ENCODE measurements at regions of chr9 and their contacts with region 1.

Region 1: DNA sequence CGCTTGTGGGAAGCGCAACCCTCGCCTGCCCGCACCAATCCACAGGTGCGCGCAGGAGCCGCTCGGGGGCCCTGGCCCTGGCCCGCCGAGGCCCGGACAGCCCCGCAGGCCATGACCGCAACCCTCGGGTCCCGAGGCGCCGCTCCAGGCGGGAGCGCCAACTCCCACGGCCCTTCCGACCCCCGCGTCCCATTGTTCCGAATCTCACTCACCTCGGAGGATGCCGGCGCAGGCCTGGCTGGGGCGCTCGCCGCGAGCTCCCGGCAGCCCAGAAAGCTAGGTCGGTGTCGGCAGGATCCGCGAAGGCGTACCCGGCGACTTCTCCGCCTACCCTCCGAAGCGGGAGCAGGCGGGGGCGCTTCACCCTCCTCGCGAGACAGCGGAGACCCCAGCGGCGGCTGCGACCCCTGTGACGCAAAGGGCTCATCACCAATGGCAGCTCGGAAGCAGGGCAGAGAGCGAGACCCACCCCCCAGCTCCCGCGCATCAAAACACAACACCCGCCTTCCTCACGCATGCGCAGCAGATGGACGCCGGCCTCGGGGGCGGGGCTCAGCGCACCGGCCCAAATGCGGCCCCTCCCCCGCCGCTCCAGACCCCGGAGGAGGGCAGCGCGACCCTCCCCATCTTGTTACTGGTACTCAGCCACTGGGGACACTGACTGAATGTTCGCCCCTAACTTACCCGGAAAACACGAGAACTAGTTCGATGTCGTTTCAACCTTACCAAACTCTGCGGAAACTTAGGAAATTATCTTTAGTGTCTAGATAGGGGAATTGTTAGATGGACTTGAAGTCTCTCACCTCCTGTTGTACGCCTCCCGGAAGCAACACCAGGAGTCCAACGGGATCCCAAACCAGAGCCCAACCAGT is 1.3 kb upstream of the SMIM27 start:
- DNase-seq: peak; percentile 93 to 97 (median 95)
- ATAC-seq: peak; percentile 80 to 89 (median 88)
- H3K4me3 ChIP-seq: peak overlapping the region; percentile 54 to 87 (median 76)
- H3K27ac ChIP-seq: peak overlapping the region; percentile 64 to 99 (median 96)
- H3K4me1 ChIP-seq: peaks cover 0 to 39% (median 18%) of the 10 kb centered on the region in 12 donors
- H3K27me3 ChIP-seq: no peaks in the 10 kb centered on the region
- CTCF ChIP-seq: peak in 2 of 12 donors; percentile 13 to 40
- POLR2A ChIP-seq: peak in 1 of 2 donors; percentile 40

Region 2: DNA sequence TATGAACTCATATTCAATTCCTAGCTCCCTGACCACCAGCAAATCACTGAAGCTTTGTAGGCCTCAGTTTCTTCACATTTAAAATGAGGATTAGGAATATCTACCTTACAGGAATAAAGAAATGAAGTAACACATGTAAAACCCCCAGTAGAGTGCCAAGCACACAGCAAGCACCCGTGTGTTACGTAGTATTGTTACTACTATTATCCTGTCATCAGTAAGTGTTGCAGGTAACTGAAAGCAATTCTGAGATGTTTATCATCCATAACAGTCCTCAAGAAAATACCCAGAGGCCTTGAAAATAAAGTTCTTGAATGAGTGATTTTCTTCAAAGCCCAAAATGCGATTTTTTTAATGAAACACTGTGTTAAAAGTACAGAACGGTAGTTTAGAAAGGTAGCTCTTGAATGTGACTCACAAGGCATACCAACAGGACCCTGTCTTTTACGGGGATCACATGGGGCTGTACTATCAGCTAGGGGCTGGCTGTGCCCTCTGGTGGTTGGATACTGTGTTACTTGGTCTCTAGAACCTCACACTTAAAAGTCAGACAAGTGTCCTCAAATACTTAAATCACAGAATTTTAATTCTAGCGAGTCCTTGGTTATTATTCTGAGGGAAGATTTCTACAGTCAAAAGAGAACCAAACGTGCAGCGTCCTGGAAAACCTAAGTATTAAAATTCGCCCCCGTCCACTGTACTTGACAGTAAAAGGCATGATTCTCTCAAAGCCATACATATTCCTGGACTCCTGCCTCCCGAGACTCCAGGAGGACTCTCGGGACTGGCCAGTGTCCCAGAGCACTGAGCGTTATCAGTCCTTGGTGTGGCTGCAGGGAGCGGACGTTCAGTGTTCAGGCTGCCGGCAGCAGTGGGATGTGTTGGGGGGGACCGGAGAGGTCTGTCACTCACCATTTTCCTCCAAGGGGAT is 21.4 kb after region 1 on chr9:
- intact Hi-C with region 1: loop called in 3 of 10 experiments (anchors 1 to 2 kb)
- DNase-seq: peak in 4 of 5 donors; percentile 46 to 79 (median 58)
- ATAC-seq: peak; percentile 83 to 89 (median 86)
- H3K4me3 ChIP-seq: peak overlapping the region; percentile 71 to 96 (median 80)
- H3K27ac ChIP-seq: peak overlapping the region; percentile 79 to 98 (median 92)
- H3K4me1 ChIP-seq: peaks cover 0 to 35% (median 21%) of the 10 kb centered on the region in 12 donors
- H3K27me3 ChIP-seq: no peaks in the 10 kb centered on the region
- CTCF ChIP-seq: peak; percentile 13 to 66 (median 49)
- POLR2A ChIP-seq: no peak